Calu3 (cell line): ENCODE measurements at regions of chr6 and their contacts with region 1.

Region 1: GRCh38 chr6:26122793-26123674 is 35.8 kb downstream of the HFE start:
- DNase-seq: peak; percentile 97
- H3K4me3 Mint-ChIP-seq: peak overlapping the region; percentile 98
- H3K27ac Mint-ChIP-seq: peak overlapping the region; percentile 100
- H3K4me1 Mint-ChIP-seq: peaks cover 28% of the 10 kb centered on the region
- H3K27me3 Mint-ChIP-seq: peaks cover 14% of the 10 kb centered on the region
- CTCF ChIP-seq: no peak

Region 2: DNA sequence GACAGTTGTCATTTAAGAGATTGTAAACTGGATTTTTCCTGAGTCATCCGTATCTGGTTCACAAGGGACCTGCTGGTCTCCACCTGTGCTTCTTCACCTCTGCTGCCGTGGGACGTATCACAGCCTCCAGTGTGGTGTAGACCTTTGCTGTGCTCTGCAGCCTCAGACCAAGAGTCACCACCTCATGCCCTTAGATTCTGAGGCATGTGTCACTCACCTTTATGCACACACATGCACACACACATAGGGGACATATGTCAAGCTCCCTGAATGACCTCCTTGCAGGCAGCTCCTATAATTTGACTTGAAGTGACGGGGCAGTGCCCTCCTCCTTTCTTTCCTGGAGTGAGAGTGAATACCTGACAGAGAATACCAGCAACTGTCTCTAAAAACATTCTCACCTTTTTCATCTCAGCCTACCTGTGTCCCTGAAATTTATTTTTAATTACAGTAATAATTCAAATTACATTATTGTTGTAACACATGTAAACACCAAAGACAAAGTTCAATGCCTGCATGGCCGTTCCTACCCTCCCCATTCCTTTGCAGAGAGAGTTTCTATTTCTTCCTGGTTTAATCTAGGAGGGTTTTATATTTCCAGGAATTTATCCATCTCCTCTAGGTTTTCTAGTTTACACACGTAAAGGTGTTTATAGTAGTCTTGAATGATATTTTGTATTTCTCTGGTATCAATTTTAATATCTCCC is 364.9 kb before region 1 on chr6:
- CTCF ChIA-PET with region 1: no interaction called
- intact Hi-C with region 1: no loop called
- DNase-seq: no peak
- H3K4me3 Mint-ChIP-seq: no peak overlapping the region
- H3K27ac Mint-ChIP-seq: no peak overlapping the region
- H3K4me1 Mint-ChIP-seq: peaks cover 37% of the 10 kb centered on the region
- H3K27me3 Mint-ChIP-seq: no peaks in the 10 kb centered on the region
- CTCF ChIP-seq: no peak

Region 3: GRCh38 chr6:26054857-26055669 is 68.0 kb before region 1 on chr6:
- CTCF ChIA-PET with region 1: interaction called, 3 read pairs
- intact Hi-C with region 1: loop called (anchors 5 kb)
- DNase-seq: peak; percentile 90
- H3K4me3 Mint-ChIP-seq: peak overlapping the region; percentile 71
- H3K27ac Mint-ChIP-seq: peak overlapping the region; percentile 97
- H3K4me1 Mint-ChIP-seq: peaks cover 34% of the 10 kb centered on the region
- H3K27me3 Mint-ChIP-seq: no peaks in the 10 kb centered on the region
- CTCF ChIP-seq: no peak

Region 4: GRCh38 chr6:26065952-26066380 is 57.1 kb before region 1 on chr6:
- CTCF ChIA-PET with region 1: no interaction called
- intact Hi-C with region 1: loop called (anchors 2 kb)
- DNase-seq: peak; percentile 86
- H3K4me3 Mint-ChIP-seq: peak overlapping the region; percentile 32
- H3K27ac Mint-ChIP-seq: peak overlapping the region; percentile 43
- H3K4me1 Mint-ChIP-seq: peaks cover 21% of the 10 kb centered on the region
- H3K27me3 Mint-ChIP-seq: no peaks in the 10 kb centered on the region
- CTCF ChIP-seq: peak; percentile 73

Region 5: GRCh38 chr6:26103770-26104456 is 19.1 kb before region 1 on chr6:
- CTCF ChIA-PET with region 1: interaction called, 21 read pairs
- intact Hi-C with region 1: loop called (anchors 1 kb)
- DNase-seq: peak; percentile 91
- H3K4me3 Mint-ChIP-seq: peak overlapping the region; percentile 82
- H3K27ac Mint-ChIP-seq: peak overlapping the region; percentile 99
- H3K4me1 Mint-ChIP-seq: peaks cover 28% of the 10 kb centered on the region
- H3K27me3 Mint-ChIP-seq: no peaks in the 10 kb centered on the region
- CTCF ChIP-seq: peak; percentile 56

Region 6: DNA sequence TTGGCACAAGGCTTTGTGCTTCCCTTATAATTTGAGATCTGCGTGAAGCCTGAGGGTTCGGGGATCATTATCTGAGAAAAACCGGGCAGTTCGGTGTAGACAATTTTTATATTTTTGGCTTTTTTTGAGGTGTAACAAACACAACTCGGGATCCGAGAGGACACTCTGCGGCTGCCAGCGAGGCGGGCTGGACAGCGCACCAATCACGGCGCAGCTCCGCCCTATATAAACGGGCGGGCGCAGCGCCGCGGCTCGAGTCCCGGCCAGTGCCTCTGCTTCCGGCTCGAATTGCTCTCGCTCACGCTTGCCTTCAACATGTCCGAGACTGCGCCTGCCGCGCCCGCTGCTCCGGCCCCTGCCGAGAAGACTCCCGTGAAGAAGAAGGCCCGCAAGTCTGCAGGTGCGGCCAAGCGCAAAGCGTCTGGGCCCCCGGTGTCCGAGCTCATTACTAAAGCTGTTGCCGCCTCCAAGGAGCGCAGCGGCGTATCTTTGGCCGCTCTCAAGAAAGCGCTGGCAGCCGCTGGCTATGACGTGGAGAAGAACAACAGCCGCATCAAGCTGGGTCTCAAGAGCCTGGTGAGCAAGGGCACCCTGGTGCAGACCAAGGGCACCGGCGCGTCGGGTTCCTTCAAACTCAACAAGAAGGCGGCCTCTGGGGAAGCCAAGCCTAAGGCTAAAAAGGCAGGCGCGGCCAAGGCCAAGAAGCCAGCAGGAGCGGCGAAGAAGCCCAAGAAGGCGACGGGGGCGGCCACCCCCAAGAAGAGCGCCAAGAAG is 33.2 kb after region 1 on chr6:
- CTCF ChIA-PET with region 1: interaction called, 17 read pairs
- intact Hi-C with region 1: loop called (anchors 1 kb)
- DNase-seq: peak; percentile 93
- H3K4me3 Mint-ChIP-seq: peak overlapping the region; percentile 85
- H3K27ac Mint-ChIP-seq: peak overlapping the region; percentile 100
- H3K4me1 Mint-ChIP-seq: peaks cover 51% of the 10 kb centered on the region
- H3K27me3 Mint-ChIP-seq: peaks cover 17% of the 10 kb centered on the region
- CTCF ChIP-seq: no peak

Region 7: DNA sequence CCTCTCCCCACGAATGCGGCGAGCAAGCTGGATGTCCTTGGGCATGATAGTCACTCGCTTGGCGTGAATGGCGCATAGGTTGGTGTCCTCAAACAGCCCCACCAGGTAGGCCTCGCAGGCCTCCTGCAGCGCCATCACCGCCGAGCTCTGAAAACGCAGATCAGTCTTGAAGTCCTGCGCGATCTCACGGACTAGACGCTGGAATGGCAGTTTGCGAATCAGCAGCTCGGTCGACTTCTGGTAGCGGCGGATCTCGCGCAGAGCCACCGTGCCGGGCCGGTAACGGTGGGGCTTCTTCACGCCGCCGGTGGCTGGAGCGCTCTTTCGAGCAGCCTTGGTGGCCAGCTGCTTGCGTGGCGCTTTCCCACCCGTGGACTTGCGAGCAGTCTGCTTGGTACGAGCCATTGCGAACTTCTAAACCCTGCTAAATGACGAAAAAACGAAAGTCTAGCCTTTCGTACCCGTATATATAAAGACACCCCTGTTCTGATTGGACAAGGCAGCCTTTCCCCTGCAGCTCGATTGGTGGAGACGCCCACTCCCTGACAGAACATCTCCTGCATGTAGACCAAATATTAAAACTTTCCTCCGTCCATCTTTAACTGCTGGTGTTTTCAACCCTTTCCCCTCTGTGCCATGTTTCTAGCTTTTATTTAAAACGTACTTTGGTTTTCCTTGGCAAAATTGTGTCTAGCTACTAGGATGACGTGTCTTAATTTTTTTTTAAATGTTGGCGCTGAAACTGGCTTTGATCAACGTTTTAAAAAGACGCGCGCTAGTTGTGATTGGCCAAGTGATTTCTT is 74.0 kb after region 1 on chr6:
- CTCF ChIA-PET with region 1: interaction called, 11 read pairs
- intact Hi-C with region 1: loop called (anchors 1 kb)
- DNase-seq: peak; percentile 84
- H3K4me3 Mint-ChIP-seq: peak overlapping the region; percentile 90
- H3K27ac Mint-ChIP-seq: peak overlapping the region; percentile 93
- H3K4me1 Mint-ChIP-seq: peaks cover 40% of the 10 kb centered on the region
- H3K27me3 Mint-ChIP-seq: no peaks in the 10 kb centered on the region
- CTCF ChIP-seq: no peak

Region 8: DNA sequence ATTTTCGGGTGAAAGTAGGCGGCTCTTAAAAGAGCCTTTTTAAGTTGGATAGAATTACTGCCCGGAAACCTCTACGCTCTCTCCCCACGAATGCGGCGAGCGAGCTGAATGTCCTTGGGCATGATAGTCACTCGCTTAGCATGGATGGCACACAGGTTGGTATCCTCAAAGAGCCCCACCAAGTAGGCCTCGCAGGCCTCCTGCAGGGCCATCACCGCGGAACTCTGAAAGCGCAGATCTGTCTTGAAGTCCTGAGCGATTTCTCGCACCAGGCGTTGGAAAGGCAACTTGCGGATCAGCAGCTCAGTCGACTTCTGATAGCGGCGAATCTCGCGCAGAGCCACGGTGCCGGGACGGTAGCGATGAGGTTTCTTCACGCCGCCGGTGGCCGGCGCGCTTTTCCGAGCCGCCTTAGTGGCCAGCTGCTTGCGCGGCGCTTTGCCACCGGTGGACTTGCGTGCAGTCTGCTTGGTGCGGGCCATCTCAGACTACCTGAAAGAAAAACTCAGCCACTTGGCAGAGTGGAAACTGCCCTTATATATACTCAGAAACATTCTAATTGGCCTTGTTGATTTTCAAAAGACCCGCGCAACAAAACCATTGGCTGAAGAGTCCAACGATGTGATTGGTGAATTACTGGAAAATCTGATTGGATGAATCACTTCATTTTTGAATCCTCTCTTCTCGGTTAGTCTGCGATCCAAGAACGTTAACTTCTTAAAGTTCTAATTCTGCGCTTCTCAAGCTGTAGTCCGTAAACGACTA is 148.1 kb after region 1 on chr6:
- CTCF ChIA-PET with region 1: no interaction called
- intact Hi-C with region 1: loop called (anchors 5 kb)
- DNase-seq: peak; percentile 85
- H3K4me3 Mint-ChIP-seq: no peak overlapping the region
- H3K27ac Mint-ChIP-seq: no peak overlapping the region
- H3K4me1 Mint-ChIP-seq: peaks cover 20% of the 10 kb centered on the region
- H3K27me3 Mint-ChIP-seq: no peaks in the 10 kb centered on the region
- CTCF ChIP-seq: no peak